Prostate gland (tissue), 2 donors: ENCODE measurements at regions of chr1 and their contacts with region 1.

Region 1: DNA sequence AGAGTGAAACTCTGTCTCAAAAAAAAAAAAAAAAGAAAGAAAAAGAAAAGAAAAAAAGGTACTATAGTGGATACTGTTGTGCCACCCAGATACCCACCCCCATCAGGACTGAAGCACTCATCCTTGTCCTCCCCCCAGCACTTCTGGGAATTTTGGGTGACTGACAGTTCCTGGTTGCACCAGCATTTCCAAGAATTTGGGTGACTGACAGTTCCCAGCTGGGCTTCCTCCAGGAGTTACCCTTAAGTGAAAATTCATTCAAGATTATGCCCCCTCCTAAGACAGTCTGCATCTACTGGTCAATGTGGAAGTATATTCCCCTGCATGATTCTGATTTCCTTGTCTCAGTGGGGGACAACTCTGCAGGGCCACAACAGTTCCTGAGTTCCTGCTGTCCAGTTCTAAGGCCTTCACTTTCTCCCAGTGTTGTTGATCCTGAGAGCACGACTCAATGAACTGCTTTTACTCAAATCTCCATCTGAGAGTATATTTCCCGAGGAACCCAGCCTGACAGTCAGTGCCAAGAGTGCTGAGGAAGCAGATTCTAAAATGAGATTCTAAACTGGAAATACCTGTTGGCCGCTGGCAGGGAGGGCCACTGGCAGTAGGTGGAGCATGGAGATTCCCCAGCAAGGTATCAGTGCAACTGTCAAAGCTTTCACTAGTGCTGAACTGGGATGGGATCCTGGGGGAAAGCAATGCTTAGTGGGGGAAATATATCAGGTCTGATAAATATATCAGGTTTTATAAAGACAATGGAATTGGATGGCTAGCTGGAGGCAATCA is 18.5 kb downstream of the RIIAD1 start:
- DNase-seq: peak; percentile 90
- H3K4me3 ChIP-seq: no peak overlapping the region
- H3K27ac ChIP-seq: peak overlapping the region; percentile 50 to 75
- H3K4me1 ChIP-seq: peaks cover 7% of the 10 kb centered on the region
- H3K27me3 ChIP-seq: no peaks in the 10 kb centered on the region
- CTCF ChIP-seq: peak in 3 of 4 experiments; percentile 12 to 44 (median 29)
- POLR2A ChIP-seq: no peak

Region 2: GRCh38 chr1:151485685-151486255 is 254.0 kb before region 1 on chr1:
- intact Hi-C with region 1: no loop called
- DNase-seq: no peak
- H3K4me3 ChIP-seq: no peak overlapping the region
- H3K27ac ChIP-seq: no peak overlapping the region
- H3K4me1 ChIP-seq: no peaks in the 10 kb centered on the region
- H3K27me3 ChIP-seq: no peaks in the 10 kb centered on the region
- CTCF ChIP-seq: no peak
- POLR2A ChIP-seq: no peak

Region 3: DNA sequence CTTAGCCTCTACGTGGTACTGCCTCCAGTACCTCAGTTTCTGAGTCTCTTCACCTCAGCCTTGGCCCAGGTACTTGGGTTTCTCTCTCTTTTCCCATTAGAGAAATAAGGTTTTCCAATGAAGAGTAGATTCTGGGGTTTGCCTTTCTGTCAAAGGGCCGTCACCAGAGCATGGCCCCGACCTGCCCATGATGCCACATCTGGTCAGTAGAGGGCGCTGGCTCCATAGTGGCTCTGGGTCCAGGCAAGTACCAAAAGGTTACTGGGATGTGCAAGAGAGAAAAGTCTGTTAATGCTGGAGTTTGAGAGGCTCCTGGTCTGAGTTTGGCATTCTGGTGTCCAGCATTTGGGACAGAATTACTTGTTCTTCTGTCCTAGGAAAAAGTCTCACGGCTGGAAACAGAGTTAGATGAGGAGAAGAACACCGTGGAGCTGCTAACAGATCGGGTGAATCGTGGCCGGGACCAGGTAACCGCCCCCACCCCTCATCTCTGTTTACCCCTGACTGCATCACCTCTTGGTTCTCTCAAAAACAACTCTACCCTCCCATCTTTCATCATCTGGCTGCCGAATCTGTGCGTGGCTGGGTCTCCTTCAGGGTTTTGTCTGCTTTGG is 205.0 kb before region 1 on chr1:
- intact Hi-C with region 1: loop called (anchors 2 kb)
- DNase-seq: peak; percentile 73
- H3K4me3 ChIP-seq: no peak overlapping the region
- H3K27ac ChIP-seq: no peak overlapping the region
- H3K4me1 ChIP-seq: peaks cover 4% of the 10 kb centered on the region
- H3K27me3 ChIP-seq: no peaks in the 10 kb centered on the region
- CTCF ChIP-seq: peak; percentile 56 to 84 (median 74)
- POLR2A ChIP-seq: no peak

Region 4: GRCh38 chr1:151594143-151594625 is 145.6 kb before region 1 on chr1:
- intact Hi-C with region 1: loop called (anchors 2 kb)
- DNase-seq: peak; percentile 85
- H3K4me3 ChIP-seq: no peak overlapping the region
- H3K27ac ChIP-seq: no peak overlapping the region
- H3K4me1 ChIP-seq: no peaks in the 10 kb centered on the region
- H3K27me3 ChIP-seq: no peaks in the 10 kb centered on the region
- CTCF ChIP-seq: peak; percentile 69 to 88 (median 86)
- POLR2A ChIP-seq: no peak